Activated CD4-positive, alpha-beta T cell treated with anti-CD3 and anti-CD28 coated beads, Interleukin-2, amount 10 ng/mL, durations not matched to agents 24 days and 14 days (primary cell): ENCODE measurements at regions of chr2 and their contacts with region 1.

Region 1: DNA sequence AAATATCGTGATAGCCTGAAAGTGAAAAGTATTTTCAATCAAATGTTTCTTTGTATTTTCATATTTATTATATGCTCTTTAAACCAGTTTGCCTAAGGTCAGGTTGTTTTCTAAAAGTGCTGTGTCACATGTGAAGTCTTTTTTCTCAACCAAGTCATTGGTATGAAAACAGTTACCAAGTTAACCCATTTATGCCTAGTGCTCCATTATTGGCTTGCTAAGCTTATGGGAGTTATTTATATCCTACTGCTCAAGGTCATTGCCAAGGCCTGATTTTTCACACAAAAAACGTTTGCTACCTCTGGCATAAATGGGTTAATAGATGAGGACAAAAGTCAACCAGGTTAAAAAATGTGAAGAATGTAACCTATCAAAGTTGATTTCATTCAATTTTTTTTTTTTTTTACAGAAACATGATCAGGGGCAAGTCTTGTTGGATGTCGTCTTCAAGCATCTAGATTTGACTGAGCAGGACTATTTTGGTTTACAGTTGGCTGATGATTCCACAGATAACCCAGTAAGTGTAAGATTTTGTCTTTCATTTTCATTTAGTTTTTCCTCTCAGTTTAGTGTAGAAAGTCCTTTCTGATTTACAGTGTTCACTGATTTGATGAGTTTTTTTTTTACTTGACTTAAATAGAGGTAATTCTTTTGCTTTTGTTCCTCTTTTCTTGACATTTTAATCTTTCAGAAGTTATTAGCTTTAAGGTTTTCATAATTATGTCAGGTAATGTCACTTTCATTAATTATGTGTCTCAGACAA is 102.6 kb downstream of the PTPN4 start:
- DNase-seq: peak; percentile 64
- H3K4me3 Mint-ChIP-seq: peak overlapping the region; percentile 56
- H3K27ac Mint-ChIP-seq: peak overlapping the region; percentile 62
- H3K4me1 Mint-ChIP-seq: peaks cover 40% of the 10 kb centered on the region
- H3K27me3 Mint-ChIP-seq: no peaks in the 10 kb centered on the region

Region 2: DNA sequence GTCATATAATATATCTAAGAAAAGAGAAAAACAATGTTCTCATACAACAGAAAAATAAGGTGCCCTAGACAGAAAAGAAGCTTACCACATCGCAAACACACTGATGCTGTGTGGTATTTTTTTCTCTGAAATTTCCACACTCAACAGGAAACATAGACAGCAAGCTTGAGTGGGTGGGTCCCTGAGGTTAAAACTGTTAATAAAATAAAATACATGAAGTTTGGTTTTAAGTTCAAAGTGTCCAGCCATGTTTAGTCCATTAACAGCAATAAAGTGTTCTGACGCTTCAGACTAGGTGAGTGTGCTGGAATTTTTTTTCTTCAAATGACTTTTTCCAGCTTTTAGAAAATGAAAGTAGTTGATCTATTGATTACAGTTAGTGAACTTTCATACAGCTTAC is 67.2 kb after region 1 on chr2:
- intact Hi-C with region 1: loop called (anchors 2 kb)
- DNase-seq: peak; percentile 84
- H3K4me3 Mint-ChIP-seq: peak overlapping the region; percentile 75
- H3K27ac Mint-ChIP-seq: peak overlapping the region; percentile 85
- H3K4me1 Mint-ChIP-seq: peaks cover 45% of the 10 kb centered on the region
- H3K27me3 Mint-ChIP-seq: no peaks in the 10 kb centered on the region